ENCODE measurements at regions of chr18 and their contacts with region 1.

Region 1: GRCh38 chr18:42298759-42299675 is 344.0 kb downstream of the PIK3C3 start:
- DNase-seq: no peak
- ATAC-seq: peak; percentile 95
- H3K4me3 ChIP-seq: no peak overlapping the region
- H3K27ac ChIP-seq: no peak overlapping the region
- H3K4me1 ChIP-seq: no peaks in the 10 kb centered on the region
- H3K27me3 ChIP-seq: no peaks in the 10 kb centered on the region
- CTCF ChIP-seq: peak; percentile 85 to 89 (median 85)
- EP300 ChIP-seq: no peak
- POLR2A ChIP-seq: no peak
- RAD21 ChIP-seq: peak; percentile 77

Region 2: DNA sequence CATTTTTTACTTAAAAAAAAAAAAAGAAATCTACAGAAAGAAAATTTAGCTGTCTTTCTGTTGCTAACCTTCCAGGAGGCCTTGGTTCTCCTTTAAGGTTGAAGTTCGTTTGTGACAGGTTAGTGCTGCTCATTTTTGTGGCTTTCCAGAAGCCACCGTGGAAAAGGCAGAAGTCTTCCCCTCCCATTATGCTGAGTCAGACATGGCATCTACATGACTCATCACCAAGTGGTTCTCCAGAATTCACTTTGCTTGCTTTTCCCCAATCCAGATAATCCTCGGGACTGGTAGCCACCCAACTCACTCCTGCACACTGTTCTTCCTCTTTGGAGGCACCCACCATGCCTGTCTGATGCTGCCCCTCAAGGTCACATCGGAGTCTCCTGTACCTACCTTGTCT is 115.3 kb before region 1 on chr18:
- CTCF ChIA-PET with region 1: interaction called, 3 read pairs
- POLR2A ChIA-PET with region 1: no interaction called
- RAD21 ChIA-PET with region 1: interaction called, 5 read pairs
- SMC1A ChIA-PET with region 1: interaction called, 11 read pairs
- in situ Hi-C with region 1: no loop called
- intact Hi-C with region 1: no loop called
- DNase-seq: no peak
- ATAC-seq: no peak
- H3K4me3 ChIP-seq: no peak overlapping the region
- H3K27ac ChIP-seq: no peak overlapping the region
- H3K4me1 ChIP-seq: no peaks in the 10 kb centered on the region
- H3K27me3 ChIP-seq: no peaks in the 10 kb centered on the region
- CTCF ChIP-seq: no peak
- EP300 ChIP-seq: no peak
- POLR2A ChIP-seq: no peak
- RAD21 ChIP-seq: no peak

Region 3: GRCh38 chr18:42281124-42281523 is 17.9 kb before region 1 on chr18:
- CTCF ChIA-PET with region 1: interaction called, 25 read pairs
- POLR2A ChIA-PET with region 1: no interaction called
- RAD21 ChIA-PET with region 1: interaction called, 4 read pairs
- SMC1A ChIA-PET with region 1: interaction called, 11 read pairs
- in situ Hi-C with region 1: no loop called
- intact Hi-C with region 1: no loop called
- DNase-seq: no peak
- ATAC-seq: peak; percentile 68
- H3K4me3 ChIP-seq: no peak overlapping the region
- H3K27ac ChIP-seq: no peak overlapping the region
- H3K4me1 ChIP-seq: no peaks in the 10 kb centered on the region
- H3K27me3 ChIP-seq: no peaks in the 10 kb centered on the region
- CTCF ChIP-seq: no peak
- EP300 ChIP-seq: no peak
- POLR2A ChIP-seq: no peak
- RAD21 ChIP-seq: no peak

Region 4: GRCh38 chr18:42418121-42418520 is 119.1 kb after region 1 on chr18:
- CTCF ChIA-PET with region 1: no interaction called
- POLR2A ChIA-PET with region 1: interaction called, 10 read pairs
- RAD21 ChIA-PET with region 1: no interaction called
- SMC1A ChIA-PET with region 1: no interaction called
- in situ Hi-C with region 1: no loop called
- intact Hi-C with region 1: no loop called
- DNase-seq: no peak
- ATAC-seq: no peak
- H3K4me3 ChIP-seq: no peak overlapping the region
- H3K27ac ChIP-seq: no peak overlapping the region
- H3K4me1 ChIP-seq: no peaks in the 10 kb centered on the region
- H3K27me3 ChIP-seq: no peaks in the 10 kb centered on the region
- CTCF ChIP-seq: no peak
- EP300 ChIP-seq: no peak
- POLR2A ChIP-seq: no peak
- RAD21 ChIP-seq: no peak

Region 5: GRCh38 chr18:42824178-42824577 is 525.2 kb after region 1 on chr18:
- CTCF ChIA-PET with region 1: no interaction called
- POLR2A ChIA-PET with region 1: interaction called, 11 read pairs
- RAD21 ChIA-PET with region 1: no interaction called
- SMC1A ChIA-PET with region 1: no interaction called
- in situ Hi-C with region 1: no loop called
- intact Hi-C with region 1: no loop called
- DNase-seq: no peak
- ATAC-seq: no peak
- H3K4me3 ChIP-seq: no peak overlapping the region
- H3K27ac ChIP-seq: no peak overlapping the region
- H3K4me1 ChIP-seq: no peaks in the 10 kb centered on the region
- H3K27me3 ChIP-seq: no peaks in the 10 kb centered on the region
- CTCF ChIP-seq: no peak
- EP300 ChIP-seq: no peak
- POLR2A ChIP-seq: no peak
- RAD21 ChIP-seq: no peak

Region 6: GRCh38 chr18:43587538-43588153 is 1288.6 kb after region 1 on chr18:
- CTCF ChIA-PET with region 1: interaction called, 3 read pairs
- POLR2A ChIA-PET with region 1: no interaction called
- RAD21 ChIA-PET with region 1: no interaction called
- SMC1A ChIA-PET with region 1: interaction called, 3 read pairs
- in situ Hi-C with region 1: loop called (anchors 10 kb)
- intact Hi-C with region 1: no loop called
- DNase-seq: no peak
- ATAC-seq: peak; percentile 67
- H3K4me3 ChIP-seq: no peak overlapping the region
- H3K27ac ChIP-seq: no peak overlapping the region
- H3K4me1 ChIP-seq: no peaks in the 10 kb centered on the region
- H3K27me3 ChIP-seq: no peaks in the 10 kb centered on the region
- CTCF ChIP-seq: peak; percentile 51 to 65 (median 59)
- EP300 ChIP-seq: no peak
- POLR2A ChIP-seq: no peak
- RAD21 ChIP-seq: peak; percentile 53

Measured in GM12878 (cell line).